ENCODE measurements at regions of chr1 and their contacts with region 1.

Region 1: DNA sequence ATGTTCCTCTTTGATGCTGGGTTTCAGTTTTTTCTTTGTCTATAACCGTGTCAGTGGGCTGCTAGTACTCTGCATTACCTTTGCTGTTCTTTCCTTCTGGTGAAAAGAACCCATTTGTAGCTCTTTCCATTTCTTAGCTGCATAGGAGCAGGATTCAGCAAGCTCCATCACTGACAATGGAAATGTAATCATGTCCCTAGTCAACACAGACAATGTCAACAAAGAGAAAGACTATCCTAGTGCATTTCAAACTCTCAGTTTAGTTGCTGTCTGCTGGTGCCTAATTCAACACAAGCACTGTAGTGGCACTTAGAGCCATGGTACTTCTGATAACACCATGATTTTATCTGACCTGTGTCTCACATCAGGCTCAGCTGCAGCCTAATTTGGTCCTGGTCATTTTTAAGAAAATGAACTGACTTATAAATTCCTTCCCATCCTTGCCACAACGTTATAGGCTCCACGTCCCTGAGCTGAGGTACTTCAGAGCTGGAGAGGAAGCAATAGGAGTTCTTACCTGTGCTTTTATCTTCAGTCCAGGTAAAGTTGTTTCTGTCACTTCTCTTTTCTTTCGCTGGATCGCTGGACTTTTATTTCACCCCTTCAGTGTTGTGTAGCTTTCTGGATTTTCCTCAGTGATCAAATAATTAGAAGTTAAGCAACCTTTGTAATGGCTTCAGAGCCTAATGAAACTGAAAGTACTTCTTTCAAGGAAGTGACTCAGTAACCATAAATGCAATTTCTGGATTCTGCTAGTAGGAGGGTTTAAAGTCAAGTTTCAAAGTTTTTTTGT is at the start of gene GBP3:
- DNase-seq: peak; percentile 75
- H3K4me3 Mint-ChIP-seq: peak within 1 kb of the TSS; percentile 86
- H3K27ac Mint-ChIP-seq: peak within 1 kb of the TSS; percentile 80
- H3K4me1 Mint-ChIP-seq: peaks cover 44% of the 10 kb centered on the region
- H3K27me3 Mint-ChIP-seq: no peaks in the 10 kb centered on the region
- total RNA-seq, gene GBP3: 7.1 and 8.1 TPM in 2 replicates

Region 2: GRCh38 chr1:88956003-88956402 is 66.4 kb before region 1 on chr1:
- intact Hi-C with region 1: no loop called
- DNase-seq: no peak
- H3K4me3 Mint-ChIP-seq: no peak overlapping the region
- H3K27ac Mint-ChIP-seq: peak overlapping the region; percentile 93
- H3K4me1 Mint-ChIP-seq: peaks cover 8% of the 10 kb centered on the region
- H3K27me3 Mint-ChIP-seq: no peaks in the 10 kb centered on the region

Region 3: GRCh38 chr1:88990426-88990825 is 31.9 kb before region 1 on chr1:
- intact Hi-C with region 1: loop called (anchors 1 kb)
- DNase-seq: no peak
- H3K4me3 Mint-ChIP-seq: peak overlapping the region; percentile 20
- H3K27ac Mint-ChIP-seq: no peak overlapping the region
- H3K4me1 Mint-ChIP-seq: peaks cover 43% of the 10 kb centered on the region
- H3K27me3 Mint-ChIP-seq: no peaks in the 10 kb centered on the region

Region 4: DNA sequence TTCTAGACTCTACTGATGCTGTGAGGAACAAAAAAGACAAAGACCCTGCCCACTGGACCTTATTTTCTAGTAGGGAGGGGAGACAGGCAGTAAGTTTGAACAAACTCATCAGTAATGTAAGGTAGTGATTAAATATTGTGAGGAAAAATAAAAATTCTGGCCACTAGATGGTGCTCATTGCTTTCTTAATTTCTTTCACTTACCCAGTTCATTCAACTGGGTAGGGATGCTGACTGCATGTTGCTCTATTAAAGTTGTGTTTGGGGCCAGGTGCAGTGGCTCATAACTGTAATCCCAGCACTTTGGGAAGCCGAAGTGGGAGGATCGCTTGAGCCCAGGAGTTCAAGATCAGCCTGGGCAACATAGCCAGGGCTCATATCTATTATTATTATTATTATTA is 23.6 kb before region 1 on chr1:
- intact Hi-C with region 1: loop called (anchors 1 kb)
- DNase-seq: peak; percentile 85
- H3K4me3 Mint-ChIP-seq: no peak overlapping the region
- H3K27ac Mint-ChIP-seq: no peak overlapping the region
- H3K4me1 Mint-ChIP-seq: peaks cover 30% of the 10 kb centered on the region
- H3K27me3 Mint-ChIP-seq: no peaks in the 10 kb centered on the region

Region 5: GRCh38 chr1:89065079-89065868 is 42.9 kb after region 1 on chr1 and contains the start of gene GBP1:
- intact Hi-C with region 1: loop called (anchors 2 kb)
- DNase-seq: peak; percentile 79
- H3K4me3 Mint-ChIP-seq: peak within 1 kb of the TSS; percentile 96
- H3K27ac Mint-ChIP-seq: peak within 1 kb of the TSS; percentile 96
- H3K4me1 Mint-ChIP-seq: peaks cover 59% of the 10 kb centered on the region
- H3K27me3 Mint-ChIP-seq: no peaks in the 10 kb centered on the region
- total RNA-seq, gene GBP1: 36.9 and 38.3 TPM in 2 replicates

Region 6: GRCh38 chr1:89271341-89272015 is 249.1 kb after region 1 on chr1:
- intact Hi-C with region 1: no loop called
- DNase-seq: no peak
- H3K4me3 Mint-ChIP-seq: peak overlapping the region; percentile 99
- H3K27ac Mint-ChIP-seq: peak overlapping the region; percentile 96
- H3K4me1 Mint-ChIP-seq: peaks cover 66% of the 10 kb centered on the region
- H3K27me3 Mint-ChIP-seq: no peaks in the 10 kb centered on the region